Activated T-helper 1 cell treated with anti-CD3 and anti-CD28 coated beads, Interleukin-12 subunit alpha, Interleukin-12 subunit beta, Interleukin-2, Interleukin-4 antibody, amounts not matched to agents 30 ng/mL and 10 ng/mL and 1 ng/mL, durations not matched to agents 14 hours and 24 hours and 36 hours (primary cell): ENCODE measurements at regions of chr2 and their contacts with region 1.

Region 1: DNA sequence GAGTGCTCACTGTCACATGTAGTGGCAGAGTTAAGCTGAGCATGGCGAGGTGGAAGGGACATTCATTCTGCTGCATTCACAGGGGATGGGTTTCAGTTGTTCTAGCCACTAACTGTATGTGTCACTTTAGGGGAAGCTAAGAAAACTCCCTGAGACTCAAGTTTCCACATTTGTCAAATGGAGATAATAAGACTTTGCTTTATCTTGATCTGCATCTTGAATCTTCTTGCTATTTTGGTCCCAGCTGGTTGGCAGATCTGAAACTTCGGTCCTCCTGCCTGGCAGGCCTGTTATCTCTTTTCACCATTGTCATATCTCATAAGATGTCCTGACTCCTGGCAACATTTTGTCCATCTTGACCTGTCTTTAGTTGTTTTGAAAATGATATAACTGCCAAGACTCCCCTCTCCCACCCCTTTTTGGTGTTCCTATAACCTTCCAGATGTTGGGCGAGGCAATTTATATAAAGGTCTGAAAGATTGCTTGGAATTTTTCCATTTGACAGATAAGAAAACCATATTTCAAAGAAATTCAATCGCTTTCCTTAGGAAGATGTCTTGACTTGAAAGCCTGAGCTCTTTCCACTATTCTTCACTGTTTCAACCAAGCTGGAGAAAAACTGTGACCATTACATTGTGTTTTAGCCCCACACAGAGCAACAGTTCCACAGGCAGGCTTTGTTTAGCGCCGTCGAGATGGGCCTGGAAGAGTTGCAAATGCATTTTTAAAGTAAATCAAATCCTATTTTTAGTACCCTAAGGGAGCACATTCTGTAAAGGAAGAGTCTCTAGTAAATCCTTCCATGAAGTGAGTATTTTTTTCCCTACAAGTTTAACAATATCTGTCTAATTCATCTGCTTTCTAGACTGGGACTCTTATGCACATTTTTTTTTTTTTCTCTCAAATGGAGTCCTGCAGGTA is 33.4 kb downstream of the MYCN start:
- DNase-seq: no peak
- H3K4me3 Mint-ChIP-seq: no peak overlapping the region
- H3K27ac Mint-ChIP-seq: no peak overlapping the region
- H3K4me1 Mint-ChIP-seq: peaks cover 7% of the 10 kb centered on the region
- H3K27me3 Mint-ChIP-seq: peaks cover 3% of the 10 kb centered on the region

Region 2: DNA sequence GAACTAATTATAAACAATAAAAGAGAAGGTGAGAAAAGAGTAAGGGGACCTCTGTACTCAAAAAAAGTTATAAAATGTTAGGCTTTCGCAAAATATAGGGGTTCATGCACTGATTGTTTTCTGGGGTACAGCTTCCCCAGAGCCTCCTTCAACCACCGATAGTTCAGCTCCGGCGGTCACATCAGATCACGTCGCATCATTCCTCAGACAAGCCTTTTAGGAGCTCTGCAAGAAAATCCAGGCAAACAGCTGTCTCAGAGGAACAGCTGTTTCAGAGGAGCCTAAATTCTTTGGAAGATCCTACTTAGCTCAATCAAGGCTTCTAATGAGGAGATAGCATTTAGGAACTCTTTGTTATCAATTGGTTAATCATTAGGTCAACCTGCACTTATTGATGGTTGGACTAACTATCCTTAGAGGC is 45.3 kb after region 1 on chr2:
- intact Hi-C with region 1: loop called (anchors 1 kb)
- DNase-seq: no peak
- H3K4me3 Mint-ChIP-seq: no peak overlapping the region
- H3K27ac Mint-ChIP-seq: no peak overlapping the region
- H3K4me1 Mint-ChIP-seq: no peaks in the 10 kb centered on the region
- H3K27me3 Mint-ChIP-seq: peaks cover 11% of the 10 kb centered on the region